ENCODE measurements at regions of chr21 and their contacts with region 1.

Region 1: GRCh38 chr21:44949779-44950198 is 10.0 kb downstream of the SLX9 start:
- DNase-seq: peak; percentile 86 to 88
- H3K4me3 ChIP-seq: no peak overlapping the region
- H3K27ac ChIP-seq: peak overlapping the region; percentile 29 to 35
- H3K4me1 ChIP-seq: peaks cover 4 to 10% of the 10 kb centered on the region in 2 donors
- H3K27me3 ChIP-seq: no peaks in the 10 kb centered on the region
- CTCF ChIP-seq: peak; percentile 80 to 95 (median 92)
- POLR2A ChIP-seq: no peak

Region 2: DNA sequence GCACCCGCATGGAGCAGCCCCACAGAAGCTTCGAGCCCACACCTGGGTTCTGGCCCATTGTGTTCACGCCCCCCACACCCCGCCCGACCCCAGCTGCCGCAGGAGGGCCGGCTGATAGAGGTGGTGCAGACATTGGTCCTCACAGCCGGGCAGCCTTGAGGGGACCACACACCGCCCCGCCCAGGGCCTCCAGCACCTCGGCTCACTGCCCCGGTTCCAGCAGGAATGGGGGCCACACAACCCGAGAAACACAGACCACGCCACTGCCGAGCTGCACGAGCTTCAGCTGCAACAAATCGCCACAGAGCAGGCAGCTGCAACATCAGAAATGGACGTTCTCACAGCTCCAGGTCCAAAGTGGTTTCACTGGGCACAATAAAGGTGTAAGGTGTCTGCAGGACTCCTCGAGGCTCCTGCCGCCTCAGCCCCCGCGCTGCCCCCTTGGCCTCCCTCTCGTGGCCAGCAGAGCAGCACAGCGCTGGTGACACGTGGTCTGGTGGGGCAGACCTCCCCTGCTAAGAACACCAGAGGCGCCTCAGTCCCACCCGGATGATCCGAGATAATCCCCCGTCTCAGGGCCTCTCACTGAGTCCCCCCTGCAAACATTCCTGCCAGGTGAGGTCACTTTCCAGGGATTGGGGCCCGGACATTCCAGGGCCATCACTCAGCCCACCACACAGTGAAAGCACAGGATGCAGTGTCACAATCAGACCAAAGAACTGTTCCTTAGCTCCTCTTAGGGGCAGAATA is 62.3 kb after region 1 on chr21:
- intact Hi-C with region 1: no loop called
- DNase-seq: peak in 1 of 2 donors; percentile 84
- H3K4me3 ChIP-seq: peak overlapping the region in 1 of 3 donors; percentile 15
- H3K27ac ChIP-seq: peak overlapping the region; percentile 68 to 87
- H3K4me1 ChIP-seq: no peaks in the 10 kb centered on the region
- H3K27me3 ChIP-seq: no peaks in the 10 kb centered on the region
- CTCF ChIP-seq: no peak
- POLR2A ChIP-seq: no peak

Region 3: GRCh38 chr21:45074048-45074817 is 124.4 kb after region 1 on chr21 and contains the start of gene ADARB1:
- intact Hi-C with region 1: loop called (anchors 10 kb)
- DNase-seq: peak; percentile 31 to 52
- H3K4me3 ChIP-seq: peak within 1 kb of the TSS; percentile 80 to 98 (median 87)
- H3K27ac ChIP-seq: peak within 1 kb of the TSS; percentile 87 to 98
- H3K4me1 ChIP-seq: no peaks in the 10 kb centered on the region
- H3K27me3 ChIP-seq: no peaks in the 10 kb centered on the region
- CTCF ChIP-seq: no peak
- POLR2A ChIP-seq: no peak
- total RNA-seq, gene ADARB1: 19.9 to 21.3 (median 20.0) TPM

Region 4: GRCh38 chr21:45130324-45130774 is 180.6 kb after region 1 on chr21:
- intact Hi-C with region 1: loop called (anchors 5 kb)
- DNase-seq: no peak
- H3K4me3 ChIP-seq: peak overlapping the region in 1 of 3 donors; percentile 31
- H3K27ac ChIP-seq: peak overlapping the region; percentile 63 to 88
- H3K4me1 ChIP-seq: no peaks in the 10 kb centered on the region
- H3K27me3 ChIP-seq: no peaks in the 10 kb centered on the region
- CTCF ChIP-seq: no peak
- POLR2A ChIP-seq: no peak

Measured in breast epithelium (tissue), 4 donors.